Common myeloid progenitor, CD34-positive (primary cell): ENCODE measurements at regions of chr1 and their contacts with region 1.

Region 1: GRCh38 chr1:206583707-206584648 is 28.3 kb downstream of the EIF2D start:
- DNase-seq: peak; percentile 69 to 79 (median 72)
- H3K4me3 ChIP-seq: no peak overlapping the region
- H3K27ac ChIP-seq: no peak overlapping the region
- H3K4me1 ChIP-seq: peaks cover 19 to 43% (median 38%) of the 10 kb centered on the region in 4 experiments
- H3K27me3 ChIP-seq: no peaks in the 10 kb centered on the region

Region 2: GRCh38 chr1:206479183-206480125 is 104.5 kb before region 1 on chr1:
- CTCF ChIA-PET with region 1: interaction called, 29 read pairs
- POLR2A ChIA-PET with region 1: no interaction called
- DNase-seq: peak; percentile 75 to 88 (median 82)
- H3K4me3 ChIP-seq: no peak overlapping the region
- H3K27ac ChIP-seq: no peak overlapping the region
- H3K4me1 ChIP-seq: peaks cover 0 to 4% (median under 1%) of the 10 kb centered on the region in 4 experiments
- H3K27me3 ChIP-seq: no peaks in the 10 kb centered on the region

Region 3: GRCh38 chr1:206496131-206496793 is 87.7 kb before region 1 on chr1:
- CTCF ChIA-PET with region 1: interaction called, 62 read pairs
- POLR2A ChIA-PET with region 1: no interaction called
- DNase-seq: no peak
- H3K4me3 ChIP-seq: no peak overlapping the region
- H3K27ac ChIP-seq: no peak overlapping the region
- H3K4me1 ChIP-seq: peaks cover 4 to 19% (median 15%) of the 10 kb centered on the region in 4 experiments
- H3K27me3 ChIP-seq: no peaks in the 10 kb centered on the region

Region 4: GRCh38 chr1:206521143-206521542 is 62.8 kb before region 1 on chr1:
- CTCF ChIA-PET with region 1: interaction called, 10 read pairs
- POLR2A ChIA-PET with region 1: no interaction called
- DNase-seq: no peak
- H3K4me3 ChIP-seq: no peak overlapping the region
- H3K27ac ChIP-seq: no peak overlapping the region
- H3K4me1 ChIP-seq: peaks cover 0 to under 1% (median 0%) of the 10 kb centered on the region in 4 experiments
- H3K27me3 ChIP-seq: peaks cover 0 to 3% (median 0%) of the 10 kb centered on the region in 5 experiments

Region 5: DNA sequence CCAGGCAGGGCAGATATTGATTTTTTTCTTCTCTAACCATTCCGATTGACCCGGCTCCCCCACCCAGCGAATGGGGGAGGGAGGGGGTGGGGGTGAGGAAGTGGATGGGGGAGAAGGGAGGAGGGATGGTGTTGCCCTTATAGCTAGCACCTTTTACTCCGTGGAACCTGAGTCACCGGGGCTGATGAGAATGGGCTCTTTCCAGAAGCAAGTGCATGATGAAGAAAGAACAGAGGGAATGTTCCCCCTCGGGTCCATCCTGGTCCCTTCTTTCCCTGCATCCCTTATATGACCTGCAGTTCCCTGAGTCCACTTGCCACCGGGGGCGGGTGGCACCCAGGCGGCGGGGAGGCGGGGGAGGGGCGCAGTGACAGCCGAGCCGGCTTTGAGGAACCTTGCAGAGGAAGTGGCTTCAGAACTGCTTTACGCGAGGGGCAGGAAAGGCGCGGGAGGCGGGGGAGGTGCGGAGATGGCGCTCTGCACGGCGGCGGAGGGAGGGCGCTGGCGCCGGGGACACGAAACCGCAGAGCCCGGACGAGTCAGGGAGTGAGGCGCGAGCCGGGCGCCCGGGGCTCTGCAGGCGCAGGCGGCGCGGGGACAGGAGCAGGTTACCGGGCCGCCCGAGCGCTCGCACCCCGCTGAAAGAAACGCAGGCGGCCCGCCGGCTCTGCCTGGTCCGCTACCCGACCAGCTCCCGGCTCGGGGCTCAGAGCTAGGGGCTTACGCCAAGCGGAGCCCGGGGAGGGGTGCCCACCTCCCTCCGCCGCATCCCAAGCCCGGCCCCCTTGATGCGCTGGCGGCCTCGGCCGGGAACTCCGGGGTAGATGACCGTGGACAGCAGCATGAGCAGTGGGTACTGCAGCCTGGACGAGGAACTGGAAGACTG is 27.0 kb before region 1 on chr1:
- CTCF ChIA-PET with region 1: interaction called, 395 read pairs
- POLR2A ChIA-PET with region 1: interaction called, 6 read pairs
- DNase-seq: peak; percentile 87 to 95 (median 93)
- H3K4me3 ChIP-seq: peak overlapping the region; percentile 72 to 95 (median 86)
- H3K27ac ChIP-seq: peak overlapping the region; percentile 67 to 86
- H3K4me1 ChIP-seq: peaks cover 28 to 61% (median 59%) of the 10 kb centered on the region in 4 experiments
- H3K27me3 ChIP-seq: no peaks in the 10 kb centered on the region

Region 6: GRCh38 chr1:206600527-206600926 is 16.5 kb after region 1 on chr1:
- CTCF ChIA-PET with region 1: interaction called, 27 read pairs
- POLR2A ChIA-PET with region 1: no interaction called
- DNase-seq: no peak
- H3K4me3 ChIP-seq: no peak overlapping the region
- H3K27ac ChIP-seq: no peak overlapping the region
- H3K4me1 ChIP-seq: no peaks in the 10 kb centered on the region
- H3K27me3 ChIP-seq: no peaks in the 10 kb centered on the region

Region 7: GRCh38 chr1:206651958-206652890 is 68.2 kb after region 1 on chr1:
- CTCF ChIA-PET with region 1: no interaction called
- POLR2A ChIA-PET with region 1: no interaction called
- DNase-seq: peak in 2 of 3 donors; percentile 46 to 50
- H3K4me3 ChIP-seq: no peak overlapping the region
- H3K27ac ChIP-seq: peak overlapping the region in 1 of 2 experiments; percentile 56
- H3K4me1 ChIP-seq: peaks cover 2 to 24% (median 16%) of the 10 kb centered on the region in 4 experiments
- H3K27me3 ChIP-seq: no peaks in the 10 kb centered on the region

Region 8: GRCh38 chr1:207032528-207033017 is 448.6 kb after region 1 on chr1 and contains the start of gene C1orf116:
- CTCF ChIA-PET with region 1: no interaction called
- POLR2A ChIA-PET with region 1: no interaction called
- DNase-seq: no peak
- H3K4me3 ChIP-seq: no peak within 1 kb of the TSS
- H3K27ac ChIP-seq: peak within 1 kb of the TSS in 1 of 2 experiments; percentile 1
- H3K4me1 ChIP-seq: peaks cover 0 to 10% (median 5%) of the 10 kb centered on the region in 4 experiments
- H3K27me3 ChIP-seq: peaks cover 0 to 3% (median 0%) of the 10 kb centered on the region in 5 experiments